ENCODE measurements at regions of chr7 and their contacts with region 1.

Region 1: GRCh38 chr7:13262929-13263530 is 575.6 kb downstream of the ARL4A start:
- DNase-seq: no peak
- H3K4me3 ChIP-seq: no peak overlapping the region
- H3K27ac ChIP-seq: no peak overlapping the region
- H3K4me1 ChIP-seq: no peaks in the 10 kb centered on the region
- H3K27me3 ChIP-seq: no peaks in the 10 kb centered on the region
- CTCF ChIP-seq: peak; percentile 54 to 64 (median 63)
- EP300 ChIP-seq: no peak
- POLR2A ChIP-seq: no peak

Region 2: DNA sequence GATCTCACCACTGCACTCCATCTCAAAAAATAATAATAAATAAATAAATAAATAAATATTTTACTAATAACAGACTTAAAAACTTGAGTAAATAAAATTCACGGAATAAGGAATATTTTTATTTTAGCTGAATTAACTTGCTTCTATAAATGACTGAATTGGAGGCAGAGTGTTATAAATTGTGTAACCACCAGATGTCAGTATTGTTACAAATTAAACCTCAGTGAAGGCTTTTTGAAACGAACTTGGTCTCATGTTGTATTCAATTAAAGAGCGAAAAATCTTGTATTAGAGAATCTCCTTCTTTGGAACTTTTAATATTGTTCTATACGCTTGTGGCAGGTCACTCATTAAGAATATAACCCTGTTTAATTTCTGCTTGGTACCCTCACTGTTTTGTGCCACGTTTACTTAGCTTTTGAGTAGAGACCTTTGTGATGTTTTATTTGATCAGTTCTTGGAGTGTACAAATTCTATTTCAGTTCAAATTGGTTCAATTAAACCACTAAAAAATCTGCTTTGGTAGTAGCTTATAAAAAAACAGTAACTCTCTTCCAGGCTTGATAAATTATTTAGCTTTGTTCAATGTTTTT is 738.1 kb before region 1 on chr7:
- intact Hi-C with region 1: loop called (anchors 2 kb)
- DNase-seq: no peak
- H3K4me3 ChIP-seq: no peak overlapping the region
- H3K27ac ChIP-seq: no peak overlapping the region
- H3K4me1 ChIP-seq: no peaks in the 10 kb centered on the region
- H3K27me3 ChIP-seq: no peaks in the 10 kb centered on the region
- CTCF ChIP-seq: peak; percentile 62 to 73 (median 62)
- EP300 ChIP-seq: no peak
- POLR2A ChIP-seq: no peak

Region 3: GRCh38 chr7:12638851-12639467 is 624.1 kb before region 1 on chr7:
- intact Hi-C with region 1: loop called (anchors 2 kb)
- DNase-seq: no peak
- H3K4me3 ChIP-seq: no peak overlapping the region
- H3K27ac ChIP-seq: no peak overlapping the region
- H3K4me1 ChIP-seq: peaks cover 0 to 27% (median 22%) of the 10 kb centered on the region in 4 donors
- H3K27me3 ChIP-seq: no peaks in the 10 kb centered on the region
- CTCF ChIP-seq: peak; percentile 66 to 73 (median 68)
- EP300 ChIP-seq: no peak
- POLR2A ChIP-seq: no peak

Region 4: DNA sequence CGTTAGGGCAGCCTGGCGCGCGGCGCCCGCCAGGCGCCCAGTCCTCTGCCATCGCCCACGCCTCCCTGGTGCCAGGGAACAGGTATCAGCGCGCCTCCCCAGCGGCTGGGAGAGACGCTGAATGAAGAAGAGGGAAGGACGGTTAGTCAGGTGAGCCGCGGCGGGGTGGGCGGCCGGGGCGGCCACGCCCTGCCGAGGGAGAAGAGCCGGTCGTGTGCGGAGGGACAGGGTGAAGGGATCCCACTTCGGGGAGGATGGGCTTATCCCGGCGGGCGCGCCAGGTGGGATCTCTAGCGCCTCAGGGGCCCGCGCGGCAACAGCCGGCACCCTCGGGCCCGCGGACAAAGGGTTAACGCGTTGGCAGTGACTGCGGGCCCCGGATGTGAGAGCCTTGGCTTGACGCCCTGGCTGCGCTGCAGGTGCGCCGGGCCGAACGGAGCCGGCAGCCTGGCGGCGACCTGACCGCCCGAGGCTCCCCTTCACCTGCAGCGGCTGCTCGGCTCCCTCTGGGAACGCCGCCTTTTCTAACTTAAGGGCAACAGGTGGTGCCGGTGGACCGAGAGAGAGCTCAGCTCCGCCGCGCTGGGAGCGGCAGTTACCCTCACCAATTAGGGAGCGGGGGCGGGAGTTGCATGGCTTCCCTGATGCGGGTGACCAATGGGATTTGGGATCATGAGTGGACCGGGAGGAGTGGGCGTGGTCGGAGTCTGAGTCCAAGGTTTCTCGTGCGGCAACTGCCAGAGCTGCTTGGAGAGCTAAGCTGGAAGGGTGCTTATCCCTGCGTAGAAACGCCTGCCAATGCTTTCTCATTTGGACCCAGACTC is 575.9 kb before region 1 on chr7 and contains the start of gene ARL4A:
- intact Hi-C with region 1: loop called (anchors 5 kb)
- DNase-seq: peak; percentile 100
- H3K4me3 ChIP-seq: peak within 1 kb of the TSS; percentile 88 to 97 (median 93)
- H3K27ac ChIP-seq: peak within 1 kb of the TSS; percentile 90 to 96 (median 94)
- H3K4me1 ChIP-seq: peaks cover 0 to 43% (median 33%) of the 10 kb centered on the region in 4 donors
- H3K27me3 ChIP-seq: no peaks in the 10 kb centered on the region
- CTCF ChIP-seq: peak in 2 of 3 experiments; percentile 31 to 58
- EP300 ChIP-seq: no peak
- POLR2A ChIP-seq: peak; percentile 30
- total RNA-seq, gene ARL4A: 34.9 to 62.3 (median 52.4) TPM